CD14-positive monocyte (primary cell): ENCODE measurements at regions of chr1 and their contacts with region 1.

Region 1: GRCh38 chr1:152459596-152460528 is 45.8 kb upstream of the CRNN start:
- DNase-seq: peak; percentile 62 to 69 (median 67)
- H3K4me3 ChIP-seq: peak overlapping the region; percentile 22 to 73 (median 32)
- H3K4me3 Mint-ChIP-seq: peak overlapping the region; percentile 61 to 88
- H3K27ac ChIP-seq: peak overlapping the region; percentile 58 to 82
- H3K27ac Mint-ChIP-seq: peak overlapping the region; percentile 63 to 94 (median 90)
- H3K4me1 ChIP-seq: peaks cover 6 to 12% of the 10 kb centered on the region in 2 donors
- H3K4me1 Mint-ChIP-seq: peaks cover 23% of the 10 kb centered on the region
- H3K27me3 ChIP-seq: no peaks in the 10 kb centered on the region
- H3K27me3 Mint-ChIP-seq: peaks cover 0 to 10% (median 4%) of the 10 kb centered on the region in 3 donors
- CTCF ChIP-seq: peak; percentile 93

Region 2: GRCh38 chr1:152061952-152062351 is 397.9 kb before region 1 on chr1:
- intact Hi-C with region 1: loop called (anchors 10 kb)
- DNase-seq: no peak
- H3K4me3 ChIP-seq: no peak overlapping the region
- H3K4me3 Mint-ChIP-seq: no peak overlapping the region
- H3K27ac ChIP-seq: no peak overlapping the region
- H3K27ac Mint-ChIP-seq: no peak overlapping the region
- H3K4me1 ChIP-seq: no peaks in the 10 kb centered on the region
- H3K4me1 Mint-ChIP-seq: no peaks in the 10 kb centered on the region
- H3K27me3 ChIP-seq: peaks cover 36 to 37% of the 10 kb centered on the region in 2 donors
- H3K27me3 Mint-ChIP-seq: peaks cover 10 to 24% (median 21%) of the 10 kb centered on the region in 3 donors
- CTCF ChIP-seq: no peak

Region 3: DNA sequence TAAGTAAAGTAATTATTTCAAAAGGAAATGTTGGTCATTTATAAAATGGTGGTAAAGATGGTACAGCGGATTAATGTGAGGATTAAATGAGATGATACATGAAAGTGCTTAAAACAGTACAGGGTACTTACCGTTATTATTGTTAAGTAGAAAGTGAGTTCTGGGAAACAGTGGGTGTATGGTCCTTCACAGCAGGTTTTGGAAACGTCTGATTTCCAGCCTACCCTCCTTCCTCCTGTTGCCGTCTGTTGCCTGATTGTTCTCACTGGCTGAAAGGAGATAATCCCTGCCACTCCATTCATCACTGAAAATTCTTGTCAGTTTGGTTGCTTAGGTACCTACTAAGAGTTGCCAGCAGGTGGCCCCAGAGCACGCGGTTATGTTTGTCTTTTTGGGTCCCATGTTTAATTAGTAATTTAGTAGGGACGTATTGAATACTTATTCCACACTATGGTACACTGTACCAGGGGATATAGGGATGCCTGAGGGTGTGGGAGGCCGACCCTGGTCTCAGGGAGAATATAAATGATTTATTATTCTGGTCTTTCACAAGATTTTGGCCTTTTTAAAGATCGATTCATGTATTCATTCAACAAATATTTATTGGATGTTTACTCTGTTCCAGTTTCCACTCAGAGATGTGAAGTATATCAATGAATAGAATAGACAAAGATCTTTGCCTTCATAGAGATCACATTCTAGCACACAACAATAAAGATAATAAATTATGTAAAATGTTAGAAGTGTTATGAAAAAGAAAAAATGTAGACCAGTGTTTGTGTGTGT is 270.0 kb before region 1 on chr1:
- intact Hi-C with region 1: loop called (anchors 2 kb)
- DNase-seq: peak; percentile 44 to 66 (median 59)
- H3K4me3 ChIP-seq: peak overlapping the region in 1 of 3 experiments; percentile 82
- H3K4me3 Mint-ChIP-seq: peak overlapping the region; percentile 78 to 87
- H3K27ac ChIP-seq: no peak overlapping the region
- H3K27ac Mint-ChIP-seq: peak overlapping the region in 2 of 7 donors; percentile 65 to 73
- H3K4me1 ChIP-seq: peaks cover 15 to 20% of the 10 kb centered on the region in 2 donors
- H3K4me1 Mint-ChIP-seq: peaks cover 27% of the 10 kb centered on the region
- H3K27me3 ChIP-seq: peaks cover 0 to 15% of the 10 kb centered on the region in 2 donors
- H3K27me3 Mint-ChIP-seq: peaks cover 14 to 32% (median 20%) of the 10 kb centered on the region in 3 donors
- CTCF ChIP-seq: peak; percentile 78

Region 4: GRCh38 chr1:152347116-152347728 is 112.6 kb before region 1 on chr1:
- intact Hi-C with region 1: loop called (anchors 5 to 10 kb)
- DNase-seq: peak; percentile 24 to 53 (median 36)
- H3K4me3 ChIP-seq: no peak overlapping the region
- H3K4me3 Mint-ChIP-seq: no peak overlapping the region
- H3K27ac ChIP-seq: no peak overlapping the region
- H3K27ac Mint-ChIP-seq: no peak overlapping the region
- H3K4me1 ChIP-seq: no peaks in the 10 kb centered on the region
- H3K4me1 Mint-ChIP-seq: no peaks in the 10 kb centered on the region
- H3K27me3 ChIP-seq: peaks cover 0 to 15% of the 10 kb centered on the region in 2 donors
- H3K27me3 Mint-ChIP-seq: peaks cover 1 to 14% (median 4%) of the 10 kb centered on the region in 3 donors
- CTCF ChIP-seq: peak; percentile 98